ENCODE measurements at regions of chr12 and their contacts with region 1.

Region 1: DNA sequence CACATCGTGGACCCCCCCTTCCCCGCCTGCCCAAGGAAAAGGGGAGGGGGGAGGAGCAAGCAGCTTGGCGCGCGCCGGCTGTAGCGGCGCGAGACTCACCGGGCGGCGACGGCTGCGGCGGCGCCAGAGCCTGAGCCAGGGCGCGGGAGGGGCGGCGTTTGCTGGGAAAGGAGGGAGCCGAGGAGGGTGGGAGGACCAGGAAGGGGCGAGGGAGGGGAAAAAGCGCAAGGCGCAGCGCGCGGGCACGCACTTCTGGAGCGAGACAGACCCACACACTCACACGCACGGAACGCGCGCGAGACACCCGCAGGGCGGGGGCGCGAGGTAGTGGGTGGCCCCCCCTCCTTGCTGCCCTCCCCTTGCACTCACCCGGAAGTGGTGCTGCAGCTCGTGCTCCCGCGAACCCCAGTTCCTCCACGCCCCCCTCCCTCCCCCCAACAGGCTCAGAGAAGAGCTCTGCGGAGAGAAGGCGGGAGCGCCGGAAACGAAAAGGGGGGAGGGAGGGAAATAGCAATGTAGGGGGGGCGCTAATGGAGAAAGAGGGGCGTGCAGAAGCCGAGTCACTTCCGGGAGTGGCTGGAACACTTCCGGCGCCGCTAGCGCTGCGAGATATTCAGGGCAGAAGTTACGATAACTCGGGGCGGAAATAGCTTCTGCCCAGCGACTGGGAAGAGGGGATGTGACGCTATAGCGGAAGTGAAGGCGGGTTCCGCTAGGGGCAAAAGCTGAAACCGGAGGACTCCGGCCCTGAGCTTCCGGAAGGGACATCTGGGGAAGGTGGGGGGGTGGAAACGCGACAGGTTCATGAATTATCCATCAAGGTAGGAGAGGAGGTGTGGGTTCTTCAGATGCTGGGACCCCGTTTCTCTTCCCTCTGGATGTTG is at the start of gene ZNF384:
- DNase-seq: peak; percentile 98 to 100
- H3K4me3 ChIP-seq: peak within 1 kb of the TSS; percentile 96
- H3K4me3 Mint-ChIP-seq: peak within 1 kb of the TSS; percentile 96
- H3K27ac Mint-ChIP-seq: peak within 1 kb of the TSS; percentile 95
- H3K4me1 ChIP-seq: peaks cover 7% of the 10 kb centered on the region; the same call in 1 of the 2 replicates
- H3K4me1 Mint-ChIP-seq: peaks cover 23% of the 10 kb centered on the region
- H3K27me3 ChIP-seq: no peaks in the 10 kb centered on the region
- H3K27me3 Mint-ChIP-seq: peaks cover 9% of the 10 kb centered on the region
- CTCF ChIP-seq: peak in 1 of 2 experiments; percentile 30
- total RNA-seq, gene ZNF384: 119 and 127 TPM in 2 replicates

Region 2: GRCh38 chr12:6450869-6451347 is 238.3 kb before region 1 on chr12:
- CTCF ChIA-PET with region 1: no interaction called
- POLR2A ChIA-PET with region 1: no interaction called
- intact Hi-C with region 1: no loop called
- DNase-seq: peak in 1 of 2 experiments; percentile 45
- H3K4me3 ChIP-seq: peak overlapping the region; percentile 82
- H3K4me3 Mint-ChIP-seq: peak overlapping the region; percentile 79
- H3K27ac Mint-ChIP-seq: peak overlapping the region; percentile 93
- H3K4me1 ChIP-seq: peaks cover 9% of the 10 kb centered on the region; the same call in 1 of the 2 replicates
- H3K4me1 Mint-ChIP-seq: peaks cover 4% of the 10 kb centered on the region
- H3K27me3 ChIP-seq: no peaks in the 10 kb centered on the region
- H3K27me3 Mint-ChIP-seq: no peaks in the 10 kb centered on the region
- CTCF ChIP-seq: no peak

Region 3: DNA sequence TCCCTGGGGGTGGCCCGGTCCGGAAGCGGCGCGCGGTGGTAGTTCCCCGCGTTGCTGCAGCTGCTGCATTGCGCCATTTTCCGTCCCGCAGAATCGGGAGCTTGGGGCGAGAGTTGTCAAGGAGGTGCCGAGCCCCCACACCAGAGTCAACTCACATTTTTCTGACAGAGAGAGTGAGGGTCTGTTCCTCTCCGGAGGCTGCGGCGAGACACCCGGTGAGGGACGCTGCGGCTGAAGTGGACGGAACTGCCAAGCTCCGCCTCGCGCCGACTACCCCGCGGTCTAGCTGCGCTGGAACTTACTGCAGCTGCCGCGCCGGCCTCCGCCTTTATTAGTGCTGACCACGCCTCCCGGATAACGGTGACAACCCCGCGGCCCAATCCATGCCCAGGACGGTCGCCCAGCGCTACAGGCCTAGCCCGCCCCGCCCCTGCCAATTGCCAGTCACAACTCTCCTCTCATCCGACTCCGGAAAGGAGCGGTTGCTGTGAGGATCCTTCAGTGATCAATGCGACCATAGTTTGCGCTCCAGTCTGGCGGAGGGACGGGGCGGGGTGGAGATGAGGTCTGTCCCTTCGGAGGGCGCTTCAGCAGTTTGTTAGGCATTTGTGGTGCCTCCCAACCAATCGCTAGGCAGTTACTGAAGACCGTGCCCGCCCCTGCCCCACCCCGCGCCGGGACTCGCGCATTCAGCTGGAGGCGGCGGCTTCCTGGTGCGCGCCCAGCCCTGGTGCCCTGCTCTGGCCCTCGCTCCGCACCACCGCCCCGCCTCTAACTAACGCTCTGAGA is 218.7 kb before region 1 on chr12 and contains the start of gene VAMP1:
- CTCF ChIA-PET with region 1: no interaction called
- POLR2A ChIA-PET with region 1: interaction called, 10 read pairs
- intact Hi-C with region 1: no loop called
- DNase-seq: peak; percentile 99 to 100
- H3K4me3 ChIP-seq: peak within 1 kb of the TSS; percentile 86
- H3K4me3 Mint-ChIP-seq: peak within 1 kb of the TSS; percentile 78
- H3K27ac Mint-ChIP-seq: peak within 1 kb of the TSS; percentile 64
- H3K4me1 ChIP-seq: no peaks in the 10 kb centered on the region
- H3K4me1 Mint-ChIP-seq: peaks cover 6% of the 10 kb centered on the region
- H3K27me3 ChIP-seq: no peaks in the 10 kb centered on the region
- H3K27me3 Mint-ChIP-seq: no peaks in the 10 kb centered on the region
- CTCF ChIP-seq: no peak
- total RNA-seq, gene VAMP1: 8.4 and 9.7 TPM in 2 replicates

Region 4: DNA sequence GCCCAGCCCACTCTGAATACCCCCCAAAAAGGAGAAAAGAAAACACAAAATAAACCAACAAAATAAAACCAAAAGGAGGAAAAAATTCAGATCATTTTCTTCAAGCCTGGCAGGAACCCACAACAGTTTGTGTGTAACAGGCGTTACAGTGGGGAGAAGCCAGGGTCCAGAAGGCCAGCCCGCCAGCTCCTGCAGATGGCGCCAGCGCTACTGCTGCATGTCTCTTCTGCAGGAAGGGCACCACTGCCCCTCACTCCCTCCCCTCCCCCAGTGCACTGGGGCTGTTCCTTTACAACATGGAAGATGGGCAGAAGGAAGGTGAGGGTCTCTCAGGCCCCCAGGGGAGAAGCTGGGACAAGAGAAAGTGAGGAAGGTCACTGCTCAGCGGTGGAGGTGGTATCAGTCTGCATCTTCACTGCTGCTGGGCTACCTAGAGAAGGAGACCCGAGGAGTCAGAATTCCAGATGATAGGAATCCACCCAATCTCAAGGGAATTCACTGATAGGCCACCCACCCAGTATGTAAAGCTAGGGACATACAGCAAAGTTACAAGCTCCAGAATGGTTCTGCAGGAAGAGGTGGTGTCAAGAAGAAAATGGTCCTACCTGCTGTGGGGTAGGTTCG is 118.9 kb before region 1 on chr12:
- CTCF ChIA-PET with region 1: interaction called, 4 read pairs
- POLR2A ChIA-PET with region 1: interaction called, 13 read pairs
- intact Hi-C with region 1: loop called (anchors 2 kb)
- DNase-seq: peak; percentile 82 to 84
- H3K4me3 ChIP-seq: no peak overlapping the region
- H3K4me3 Mint-ChIP-seq: peak overlapping the region; percentile 81
- H3K27ac Mint-ChIP-seq: no peak overlapping the region
- H3K4me1 ChIP-seq: no peaks in the 10 kb centered on the region
- H3K4me1 Mint-ChIP-seq: peaks cover 23% of the 10 kb centered on the region
- H3K27me3 ChIP-seq: no peaks in the 10 kb centered on the region
- H3K27me3 Mint-ChIP-seq: no peaks in the 10 kb centered on the region
- CTCF ChIP-seq: peak; percentile 76 to 82

Region 5: DNA sequence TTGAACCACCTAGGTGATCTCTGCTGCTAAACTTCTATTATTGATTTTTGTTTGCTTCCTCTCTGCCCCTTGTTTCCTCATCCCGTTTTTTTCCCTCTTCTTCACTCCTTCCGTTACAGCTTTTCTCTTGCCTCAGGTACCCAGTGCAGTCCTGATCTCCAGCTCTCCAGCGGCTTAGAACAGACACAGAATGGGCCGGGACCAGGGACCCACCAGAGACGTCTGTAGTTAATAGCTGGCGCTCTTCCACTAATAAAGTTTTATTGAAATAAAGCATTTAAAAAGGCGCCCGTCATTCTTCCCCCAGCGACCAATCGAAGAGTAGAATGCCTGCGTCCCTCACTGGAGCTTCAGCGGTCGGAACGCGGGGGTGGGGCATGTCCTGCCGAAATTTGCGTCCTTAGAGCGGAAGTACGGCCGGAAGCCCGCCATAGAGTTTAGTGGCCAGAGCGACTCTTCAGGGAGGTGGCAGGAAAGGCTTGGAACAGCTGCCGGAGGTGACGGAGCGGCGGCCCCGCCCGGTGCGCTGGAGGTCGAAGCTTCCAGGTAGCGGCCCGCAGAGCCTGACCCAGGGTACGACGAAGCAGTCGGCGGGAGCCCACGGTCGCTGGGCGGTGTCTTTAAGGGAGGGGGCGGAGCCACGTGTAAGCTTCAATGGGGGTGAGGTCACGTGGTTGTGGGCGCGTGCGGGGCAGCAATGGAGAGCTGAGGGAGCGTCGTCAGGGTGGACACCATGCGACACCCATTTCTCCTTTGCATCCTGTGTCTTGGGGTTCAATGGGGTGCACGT is 34.6 kb after region 1 on chr12 and contains the start of gene COPS7A:
- CTCF ChIA-PET with region 1: interaction called, 30 read pairs
- POLR2A ChIA-PET with region 1: interaction called, 92 read pairs
- intact Hi-C with region 1: loop called (anchors 1 kb)
- DNase-seq: peak; percentile 100
- H3K4me3 ChIP-seq: peak within 1 kb of the TSS; percentile 63
- H3K4me3 Mint-ChIP-seq: peak within 1 kb of the TSS; percentile 73
- H3K27ac Mint-ChIP-seq: peak within 1 kb of the TSS; percentile 80
- H3K4me1 ChIP-seq: peaks cover 11% of the 10 kb centered on the region; the same call in 1 of the 2 replicates
- H3K4me1 Mint-ChIP-seq: peaks cover 11% of the 10 kb centered on the region
- H3K27me3 ChIP-seq: no peaks in the 10 kb centered on the region
- H3K27me3 Mint-ChIP-seq: no peaks in the 10 kb centered on the region
- CTCF ChIP-seq: no peak
- total RNA-seq, gene COPS7A: 56.8 and 61.9 TPM in 2 replicates

Region 6: DNA sequence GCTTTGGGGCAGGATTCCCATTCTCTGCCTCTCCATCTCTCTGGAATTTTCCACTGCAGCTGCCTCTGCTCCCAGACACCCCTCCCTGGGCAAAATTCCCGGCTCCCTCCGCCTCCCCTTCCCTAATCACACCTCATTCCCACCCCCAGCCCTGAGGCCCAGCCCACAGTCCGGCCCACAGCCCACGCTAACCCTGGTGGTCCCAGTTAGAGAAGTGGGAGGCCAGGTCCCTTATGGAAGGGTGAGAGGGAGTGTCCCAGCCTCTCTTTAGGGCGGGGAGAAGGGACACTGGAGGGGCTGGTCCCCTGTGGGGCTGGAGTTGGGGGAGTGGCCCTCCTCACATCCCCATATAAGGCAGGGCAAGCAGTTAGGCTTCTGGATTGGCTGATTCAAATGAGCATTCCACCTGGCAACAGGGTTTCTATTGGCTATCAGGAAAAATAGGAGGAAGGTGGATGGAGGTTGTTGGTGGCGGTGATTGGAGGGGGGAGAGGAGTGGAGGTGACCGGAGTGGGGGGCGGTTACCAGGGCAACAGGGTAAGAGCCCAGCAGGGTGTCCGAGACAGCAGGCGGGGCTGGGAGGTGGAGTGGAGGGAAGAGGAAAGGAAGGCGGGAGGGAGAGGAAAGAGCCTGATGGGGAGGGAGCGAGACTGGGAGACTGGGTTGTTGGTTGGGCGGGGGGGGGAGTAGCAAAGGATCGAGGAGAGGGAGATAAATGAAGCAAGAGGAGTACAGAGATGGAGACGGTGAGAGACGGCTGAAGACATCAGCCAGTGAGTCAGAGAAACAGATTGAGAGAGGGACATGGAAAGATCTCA is 75.0 kb after region 1 on chr12:
- CTCF ChIA-PET with region 1: interaction called, 16 read pairs
- POLR2A ChIA-PET with region 1: interaction called, 13 read pairs
- intact Hi-C with region 1: no loop called
- DNase-seq: peak; percentile 89 to 95
- H3K4me3 ChIP-seq: peak overlapping the region; percentile 10; the same call in 1 of the 2 replicates
- H3K4me3 Mint-ChIP-seq: peak overlapping the region; percentile 71
- H3K27ac Mint-ChIP-seq: peak overlapping the region; percentile 79
- H3K4me1 ChIP-seq: peaks cover 54% of the 10 kb centered on the region
- H3K4me1 Mint-ChIP-seq: peaks cover 53% of the 10 kb centered on the region
- H3K27me3 ChIP-seq: no peaks in the 10 kb centered on the region
- H3K27me3 Mint-ChIP-seq: no peaks in the 10 kb centered on the region
- CTCF ChIP-seq: no peak

Region 7: GRCh38 chr12:8590842-8591550 is 1901.8 kb after region 1 on chr12:
- CTCF ChIA-PET with region 1: no interaction called
- POLR2A ChIA-PET with region 1: interaction called, 12 read pairs
- intact Hi-C with region 1: no loop called
- DNase-seq: peak; percentile 20 to 45
- H3K4me3 ChIP-seq: no peak overlapping the region
- H3K4me3 Mint-ChIP-seq: no peak overlapping the region
- H3K27ac Mint-ChIP-seq: no peak overlapping the region
- H3K4me1 ChIP-seq: no peaks in the 10 kb centered on the region
- H3K4me1 Mint-ChIP-seq: peaks cover 8% of the 10 kb centered on the region
- H3K27me3 ChIP-seq: no peaks in the 10 kb centered on the region; the same call in 1 of the 2 replicates
- H3K27me3 Mint-ChIP-seq: peaks cover 2% of the 10 kb centered on the region
- CTCF ChIP-seq: no peak

Measured in Caco-2 (cell line).